H1 (cell line): ENCODE measurements at regions of chr5 and their contacts with region 1.

Region 1: GRCh38 chr5:176660860-176661641 is 13.8 kb downstream of the TSPAN17 start:
- DNase-seq: peak; percentile 80 to 89
- H3K4me3 ChIP-seq: no peak overlapping the region
- H3K27ac ChIP-seq: no peak overlapping the region
- H3K4me1 ChIP-seq: peaks cover 0 to 12% (median 8%) of the 10 kb centered on the region in 4 experiments; a peak in 6 of 7 replicates
- H3K27me3 ChIP-seq: no peaks in the 10 kb centered on the region
- CTCF ChIP-seq: peak in 2 of 3 experiments; percentile 98 to 99; a peak in 3 of 4 replicates
- EP300 ChIP-seq: no peak
- POLR2A ChIP-seq: no peak
- RAD21 ChIP-seq: peak; percentile 100

Region 2: DNA sequence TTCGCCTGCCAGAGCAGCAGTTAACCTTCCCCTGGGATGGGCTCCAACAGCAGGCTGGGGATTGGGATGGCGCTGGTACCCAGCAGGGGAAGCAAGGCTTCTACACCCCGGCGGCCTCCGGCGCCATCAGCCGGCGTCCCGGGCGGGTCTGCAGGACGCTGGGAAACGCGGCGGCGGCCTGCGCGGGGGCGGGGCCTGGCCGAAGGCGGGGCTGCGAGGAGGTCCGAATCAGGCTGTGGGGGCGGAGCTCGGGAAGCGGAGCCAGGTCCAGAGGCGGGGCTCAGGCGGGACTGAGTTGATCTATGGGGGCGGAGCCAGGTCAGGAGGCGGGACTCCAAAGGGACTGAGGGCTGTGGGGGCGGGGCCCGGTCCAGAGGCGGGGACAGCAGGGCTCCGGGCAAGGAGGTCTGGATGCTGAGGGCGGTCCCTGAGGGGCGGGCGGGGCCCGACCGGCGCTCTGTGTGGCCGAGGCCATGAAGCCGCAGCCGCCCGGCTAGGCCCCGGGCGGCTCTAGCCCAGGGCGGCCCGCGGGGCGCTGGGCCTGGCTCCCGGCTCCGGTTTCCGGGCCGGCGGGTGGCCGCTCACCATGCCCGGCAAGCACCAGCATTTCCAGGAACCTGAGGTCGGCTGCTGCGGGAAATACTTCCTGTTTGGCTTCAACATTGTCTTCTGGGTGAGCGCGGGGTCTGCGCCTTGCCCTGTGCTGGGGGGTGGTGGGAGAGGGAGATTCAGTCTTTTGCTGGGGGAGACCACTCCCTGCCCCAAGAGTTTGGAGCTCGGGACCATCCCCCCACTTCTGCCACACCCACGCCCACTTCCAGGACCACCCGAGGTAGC is 13.8 kb before region 1 on chr5 and contains the start of gene TSPAN17:
- CTCF ChIA-PET with region 1: interaction called, 21 read pairs
- POLR2A ChIA-PET with region 1: interaction called, 3 read pairs
- DNase-seq: peak; percentile 99 to 100
- H3K4me3 ChIP-seq: peak within 1 kb of the TSS; percentile 59 to 95 (median 75)
- H3K27ac ChIP-seq: peak within 1 kb of the TSS; percentile 41; the same call in 1 of the 2 replicates
- H3K4me1 ChIP-seq: peaks cover 0 to 49% (median 26%) of the 10 kb centered on the region in 4 experiments; a peak in 6 of 7 replicates
- H3K27me3 ChIP-seq: no peaks in the 10 kb centered on the region; a peak in 1 of 7 replicates
- CTCF ChIP-seq: peak in 1 of 3 experiments; percentile 13; a peak in 1 of 4 replicates
- EP300 ChIP-seq: 0 out of 3 replicates have a peak, but pooled peaks of 1 of the 2 experiments have one; percentile 1
- POLR2A ChIP-seq: peak in 1 of 2 experiments; percentile 93; a peak in 2 of 3 replicates
- RAD21 ChIP-seq: peak; percentile 28 to 50; a peak in 3 of 4 replicates
- total RNA-seq, gene TSPAN17: 53.7 and 54.7 TPM in 2 replicates

Region 3: DNA sequence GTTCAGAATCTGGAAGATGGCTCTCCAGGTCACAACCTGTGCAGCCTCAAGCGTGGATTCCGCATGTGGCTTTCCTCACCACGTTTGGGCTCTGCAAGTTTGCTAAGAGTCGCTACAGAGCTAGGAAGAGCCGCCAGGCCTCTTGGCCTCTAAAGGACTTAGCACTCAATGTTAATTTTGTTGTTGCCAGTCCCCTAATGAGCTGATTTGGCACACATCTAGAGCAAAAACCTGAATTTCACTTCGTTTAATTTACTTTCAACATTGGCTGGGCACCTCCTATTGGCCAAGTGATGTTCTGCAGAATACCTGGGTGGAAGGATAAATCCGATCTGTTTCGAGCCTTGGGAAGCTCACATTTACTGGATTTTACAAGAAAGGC is 83.5 kb after region 1 on chr5:
- CTCF ChIA-PET with region 1: interaction called, 56 read pairs
- POLR2A ChIA-PET with region 1: interaction called, 4 read pairs
- DNase-seq: no peak
- H3K4me3 ChIP-seq: peak overlapping the region in 3 of 4 experiments; percentile 3 to 61 (median 3); a peak in 2 of 8 replicates
- H3K27ac ChIP-seq: no peak overlapping the region
- H3K4me1 ChIP-seq: peaks cover 7 to 33% (median 28%) of the 10 kb centered on the region in 4 experiments
- H3K27me3 ChIP-seq: peaks cover 0 to 23% (median 8%) of the 10 kb centered on the region in 4 experiments; a peak in 6 of 7 replicates
- CTCF ChIP-seq: peak in 2 of 3 experiments; percentile 49 to 70; a peak in 3 of 4 replicates
- EP300 ChIP-seq: no peak
- POLR2A ChIP-seq: no peak
- RAD21 ChIP-seq: peak; percentile 46 to 57

Region 4: DNA sequence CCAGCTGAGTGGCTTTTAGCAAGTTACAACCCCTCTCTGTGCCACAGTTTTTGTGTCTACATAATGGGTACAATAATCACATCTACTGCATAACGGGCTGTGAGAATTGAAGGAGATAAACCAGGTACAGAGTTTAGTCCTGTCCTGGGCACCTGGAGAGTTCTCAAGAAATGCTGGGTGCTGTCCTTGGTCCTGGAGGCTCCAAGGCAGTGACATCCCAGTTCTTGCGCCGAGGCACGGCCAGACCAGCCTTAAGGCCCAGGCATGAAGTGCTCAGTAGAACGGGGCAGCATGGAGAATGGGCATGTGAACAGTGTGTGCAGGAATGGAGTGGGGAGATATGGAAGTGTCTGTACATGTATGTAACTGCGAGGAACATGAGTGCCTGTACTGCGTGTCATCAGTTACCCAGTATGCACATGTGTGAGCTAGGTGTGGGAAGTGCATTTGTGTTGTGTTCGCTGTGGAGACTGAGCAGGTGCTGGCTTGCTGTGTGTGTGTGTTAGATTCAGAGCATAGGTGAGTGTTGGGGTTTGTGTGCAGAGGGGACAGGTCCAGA is 143.0 kb after region 1 on chr5:
- CTCF ChIA-PET with region 1: interaction called, 16 read pairs
- POLR2A ChIA-PET with region 1: no interaction called
- DNase-seq: peak in 1 of 2 experiments; percentile 86
- H3K4me3 ChIP-seq: no peak overlapping the region
- H3K27ac ChIP-seq: no peak overlapping the region
- H3K4me1 ChIP-seq: peaks cover 0 to 2% (median 0%) of the 10 kb centered on the region in 4 experiments; a peak in 1 of 7 replicates
- H3K27me3 ChIP-seq: peaks cover 0 to 16% (median 11%) of the 10 kb centered on the region in 4 experiments; a peak in 6 of 7 replicates
- CTCF ChIP-seq: no peak
- EP300 ChIP-seq: no peak
- POLR2A ChIP-seq: no peak
- RAD21 ChIP-seq: peak in 1 of 2 experiments; percentile 2; a peak in 1 of 4 replicates

Region 5: DNA sequence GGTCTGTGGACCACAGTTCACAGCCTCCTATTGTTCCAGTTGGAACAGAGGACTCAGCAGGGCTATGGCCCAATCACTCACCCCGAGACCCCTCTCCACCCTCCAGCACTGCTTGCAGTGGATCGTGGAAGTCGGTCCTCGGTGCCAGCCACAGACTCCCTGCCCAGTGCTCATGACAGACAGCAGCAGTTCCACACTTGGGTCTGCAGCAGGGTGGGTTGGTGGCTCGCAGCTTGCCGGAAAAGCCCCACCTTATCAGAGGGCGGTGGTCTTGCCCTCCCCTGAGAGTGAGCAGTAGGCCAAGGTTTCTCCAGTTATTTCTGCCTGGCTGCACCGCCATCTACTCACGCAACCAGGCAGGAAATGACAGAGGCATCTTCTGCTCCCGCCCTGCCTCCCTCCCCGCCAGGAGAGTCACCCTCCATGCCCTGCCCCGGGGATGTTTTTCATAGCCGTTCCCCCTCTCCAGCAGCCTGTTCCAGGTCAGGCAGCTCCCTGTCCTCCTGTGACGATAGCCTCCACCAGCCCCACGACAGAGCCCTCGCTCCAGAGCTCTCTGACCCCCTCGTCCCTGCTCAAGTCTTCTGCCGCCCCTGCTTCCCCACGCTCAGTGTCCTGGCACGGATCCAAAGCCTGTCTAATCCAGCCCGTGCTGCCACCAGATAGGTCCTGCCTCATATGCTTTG is 183.8 kb after region 1 on chr5:
- CTCF ChIA-PET with region 1: interaction called, 13 read pairs
- POLR2A ChIA-PET with region 1: no interaction called
- DNase-seq: no peak
- H3K4me3 ChIP-seq: no peak overlapping the region
- H3K27ac ChIP-seq: no peak overlapping the region
- H3K4me1 ChIP-seq: peaks cover 0 to 20% (median 12%) of the 10 kb centered on the region in 4 experiments; a peak in 6 of 7 replicates
- H3K27me3 ChIP-seq: peaks cover 0 to 4% (median 0%) of the 10 kb centered on the region in 4 experiments; a peak in 1 of 7 replicates
- CTCF ChIP-seq: no peak
- EP300 ChIP-seq: no peak
- POLR2A ChIP-seq: no peak
- RAD21 ChIP-seq: no peak

Region 6: DNA sequence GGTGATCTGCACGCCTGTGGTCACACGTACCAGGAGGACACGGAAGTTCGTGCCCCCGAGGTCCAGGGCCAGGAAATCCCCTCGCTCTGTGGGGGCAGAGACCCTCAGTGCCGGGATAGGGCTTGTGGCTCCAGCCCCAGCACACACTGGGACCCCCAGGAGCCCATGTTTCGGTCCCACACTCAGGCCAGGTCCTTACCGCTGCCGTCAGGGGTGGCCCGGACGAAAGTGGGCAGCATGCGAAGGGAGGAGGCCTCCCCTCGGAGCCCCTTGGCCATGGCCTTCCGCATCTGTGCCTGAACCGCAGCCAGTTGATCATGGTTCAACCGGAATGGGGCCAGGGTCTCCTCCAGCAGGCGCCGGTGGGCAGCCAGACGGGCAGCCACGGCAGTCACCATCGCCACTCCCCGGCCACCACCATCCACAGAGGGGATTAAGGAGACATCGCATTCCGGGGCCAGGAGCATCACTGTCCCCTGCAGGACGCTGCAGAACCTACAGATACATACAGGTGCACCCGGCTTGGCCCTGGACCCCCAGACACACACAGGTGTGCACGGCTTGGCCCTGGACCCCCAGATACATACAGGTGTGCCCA is 226.3 kb after region 1 on chr5:
- CTCF ChIA-PET with region 1: interaction called, 14 read pairs
- POLR2A ChIA-PET with region 1: no interaction called
- DNase-seq: no peak
- H3K4me3 ChIP-seq: no peak overlapping the region
- H3K27ac ChIP-seq: no peak overlapping the region
- H3K4me1 ChIP-seq: no peaks in the 10 kb centered on the region
- H3K27me3 ChIP-seq: no peaks in the 10 kb centered on the region
- CTCF ChIP-seq: peak in 2 of 3 experiments; percentile 45 to 50; a peak in 2 of 4 replicates
- EP300 ChIP-seq: no peak
- POLR2A ChIP-seq: no peak
- RAD21 ChIP-seq: peak; percentile 58 to 69